Activated T-helper 2 cell treated with anti-CD3 and anti-CD28 coated beads, Interferon-gamma antibody, Interleukin-2, Interleukin-4, amounts not matched to agents 10 μg/mL and 5 μg/mL and 100 μg/mL, durations not matched to agents 14 hours and 24 hours and 36 hours (primary cell): ENCODE measurements at regions of chr2 and their contacts with region 1.

Region 1: DNA sequence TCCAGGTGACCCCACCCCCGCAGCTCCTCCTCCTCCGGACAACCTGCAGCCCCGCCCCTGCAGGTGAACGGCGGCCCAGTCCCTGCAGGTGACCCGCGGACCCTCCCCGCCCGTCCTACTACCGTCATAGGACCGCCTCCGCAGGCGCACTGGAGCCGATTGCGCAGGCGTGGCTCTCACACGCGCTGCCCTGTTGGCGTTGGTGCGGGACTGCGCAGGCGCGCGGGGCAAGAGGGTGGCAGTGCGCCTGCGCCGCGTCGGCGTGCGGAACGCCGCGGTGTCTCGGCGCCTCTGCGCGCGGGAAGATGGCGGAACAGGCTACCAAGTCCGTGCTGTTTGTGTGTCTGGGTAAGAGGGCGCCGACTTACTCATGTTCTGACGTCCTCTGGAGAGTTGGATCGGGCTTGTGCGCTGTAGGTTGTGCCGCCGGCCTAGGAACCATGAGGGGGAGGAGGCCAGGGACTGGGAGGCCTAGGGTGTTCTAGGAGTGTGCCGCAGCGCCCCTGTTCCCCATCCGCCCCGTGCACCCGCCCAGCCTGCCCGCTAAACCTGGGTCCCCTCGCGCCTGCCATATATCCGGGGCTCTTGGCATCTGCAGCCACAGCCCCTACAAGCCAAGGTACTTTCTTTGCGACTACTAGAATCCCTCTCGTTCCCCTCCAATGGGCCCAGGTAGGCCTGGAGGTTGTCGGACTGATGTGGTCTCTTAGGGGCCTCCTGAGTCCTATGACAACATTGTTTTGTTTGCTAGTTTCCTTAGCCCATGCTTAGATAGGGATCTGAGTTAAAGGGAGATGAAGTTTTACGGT is at the start of gene ACP1:
- DNase-seq: peak; percentile 93
- H3K4me3 Mint-ChIP-seq: peak within 1 kb of the TSS; percentile 93
- H3K27ac Mint-ChIP-seq: peak within 1 kb of the TSS; percentile 93
- H3K4me1 Mint-ChIP-seq: peaks cover 48% of the 10 kb centered on the region
- H3K27me3 Mint-ChIP-seq: no peaks in the 10 kb centered on the region
- total RNA-seq, gene ACP1: 168 and 177 TPM in 2 replicates

Region 2: GRCh38 chr2:55587-56448 is 209.0 kb before region 1 on chr2:
- intact Hi-C with region 1: no loop called
- DNase-seq: no peak
- H3K4me3 Mint-ChIP-seq: no peak overlapping the region
- H3K27ac Mint-ChIP-seq: no peak overlapping the region
- H3K4me1 Mint-ChIP-seq: no peaks in the 10 kb centered on the region
- H3K27me3 Mint-ChIP-seq: peaks cover 20% of the 10 kb centered on the region

Region 3: GRCh38 chr2:231521-232185 is 33.2 kb before region 1 on chr2:
- intact Hi-C with region 1: loop called (anchors 1 kb)
- DNase-seq: no peak
- H3K4me3 Mint-ChIP-seq: no peak overlapping the region
- H3K27ac Mint-ChIP-seq: peak overlapping the region; percentile 69
- H3K4me1 Mint-ChIP-seq: peaks cover 37% of the 10 kb centered on the region
- H3K27me3 Mint-ChIP-seq: no peaks in the 10 kb centered on the region

Region 4: GRCh38 chr2:332597-332996 is 67.7 kb after region 1 on chr2:
- intact Hi-C with region 1: no loop called
- DNase-seq: no peak
- H3K4me3 Mint-ChIP-seq: no peak overlapping the region
- H3K27ac Mint-ChIP-seq: no peak overlapping the region
- H3K4me1 Mint-ChIP-seq: no peaks in the 10 kb centered on the region
- H3K27me3 Mint-ChIP-seq: peaks cover 2% of the 10 kb centered on the region

Region 5: DNA sequence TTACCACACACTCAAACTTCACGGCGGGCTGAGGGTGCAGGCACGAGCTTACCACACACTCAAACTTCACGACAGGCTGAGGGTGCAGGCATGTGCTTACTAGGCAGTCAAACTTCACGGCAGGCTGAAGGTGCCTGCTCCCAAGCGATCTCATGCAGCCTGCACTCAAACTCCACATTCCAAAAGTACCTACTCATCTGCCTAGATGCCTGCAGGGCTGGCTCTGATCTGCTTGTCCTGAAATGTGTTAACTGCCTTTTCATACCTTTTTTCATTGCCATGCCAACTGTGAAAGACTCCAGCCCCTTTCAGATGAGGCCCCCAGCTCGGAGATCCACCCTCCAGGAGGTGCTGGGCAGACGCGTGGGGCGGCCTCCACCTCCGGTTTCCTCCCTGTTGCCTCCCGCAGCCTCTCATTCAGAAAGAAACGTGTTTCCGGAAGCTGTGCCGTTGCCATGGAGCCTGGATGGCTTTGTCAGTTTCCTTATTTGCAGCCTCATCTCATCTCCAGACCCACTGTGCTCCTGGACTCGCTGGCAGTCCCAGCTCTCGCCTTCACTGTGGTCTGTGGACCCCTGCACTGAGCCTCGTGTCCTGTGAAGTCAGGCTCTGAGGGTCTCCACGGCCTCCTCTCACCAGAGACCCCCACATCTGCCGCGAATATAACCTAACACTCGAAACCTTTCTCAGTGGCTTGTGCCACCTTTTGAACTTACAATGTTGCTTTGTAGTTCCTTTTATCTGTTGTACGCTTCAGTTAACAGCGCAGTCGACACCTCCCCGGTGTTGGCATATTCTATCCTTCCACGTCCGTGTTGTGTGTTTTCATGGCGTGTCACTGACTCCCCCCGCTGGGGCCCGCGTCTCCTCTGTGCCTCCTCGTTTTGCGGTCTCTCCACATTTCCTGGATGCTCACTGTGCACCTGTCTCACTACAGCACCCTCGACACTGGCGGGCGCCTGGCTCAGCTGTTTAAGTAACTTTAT is 129.1 kb after region 1 on chr2:
- intact Hi-C with region 1: loop called (anchors 5 kb)
- DNase-seq: peak; percentile 68
- H3K4me3 Mint-ChIP-seq: peak overlapping the region; percentile 67
- H3K27ac Mint-ChIP-seq: peak overlapping the region; percentile 72
- H3K4me1 Mint-ChIP-seq: peaks cover 25% of the 10 kb centered on the region
- H3K27me3 Mint-ChIP-seq: no peaks in the 10 kb centered on the region

Region 6: DNA sequence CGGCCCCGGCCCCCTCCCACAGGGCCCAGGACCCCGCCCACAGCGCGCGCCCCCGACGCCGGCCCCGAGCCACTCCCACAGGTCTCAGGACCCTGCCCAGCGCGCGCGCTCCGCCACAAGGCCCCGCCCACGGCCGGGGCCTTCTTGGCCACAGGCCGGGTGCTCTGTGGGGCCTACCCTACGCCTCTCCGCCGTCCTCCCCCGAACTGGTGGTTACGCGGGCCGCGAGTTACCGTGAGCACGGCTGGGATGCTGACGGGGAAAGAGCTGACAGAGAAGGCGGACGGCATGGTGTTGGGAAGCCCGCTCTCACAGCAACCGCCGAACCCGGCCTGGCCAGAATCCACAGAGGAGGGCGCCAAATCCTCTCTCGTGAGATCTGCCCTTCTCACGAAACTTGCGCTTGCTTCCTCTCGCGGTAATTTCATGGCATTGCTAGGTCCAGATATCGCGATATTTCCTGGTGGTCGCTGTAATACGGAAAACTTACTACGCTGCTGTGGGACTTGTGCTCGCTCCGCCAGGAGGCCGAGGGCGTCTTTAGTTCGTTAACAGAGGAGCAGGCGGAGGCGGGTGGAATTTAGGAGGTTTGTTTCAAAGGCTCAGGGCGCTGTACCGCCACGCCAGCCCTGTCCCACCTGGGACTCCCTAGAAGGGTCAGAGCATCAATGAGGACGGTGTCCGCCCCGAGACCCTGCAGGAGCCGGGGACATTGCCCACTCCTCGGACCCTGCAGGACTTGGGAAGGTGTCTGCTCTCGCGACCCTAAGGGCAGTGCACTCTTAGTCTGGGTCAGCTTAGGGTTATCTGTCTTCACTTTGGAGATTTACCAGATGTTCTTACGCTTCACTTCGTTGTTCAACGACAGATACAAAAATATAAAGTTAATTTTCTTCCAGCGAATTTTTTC is 412.4 kb after region 1 on chr2 and contains the start of gene TMEM18:
- intact Hi-C with region 1: loop called (anchors 2 kb)
- DNase-seq: peak; percentile 94
- H3K4me3 Mint-ChIP-seq: peak within 1 kb of the TSS; percentile 96
- H3K27ac Mint-ChIP-seq: peak within 1 kb of the TSS; percentile 99
- H3K4me1 Mint-ChIP-seq: peaks cover 34% of the 10 kb centered on the region
- H3K27me3 Mint-ChIP-seq: no peaks in the 10 kb centered on the region
- total RNA-seq, gene TMEM18: 24.1 and 26.3 TPM in 2 replicates